ENCODE measurements at regions of chr11 and their contacts with region 1.

Region 1: DNA sequence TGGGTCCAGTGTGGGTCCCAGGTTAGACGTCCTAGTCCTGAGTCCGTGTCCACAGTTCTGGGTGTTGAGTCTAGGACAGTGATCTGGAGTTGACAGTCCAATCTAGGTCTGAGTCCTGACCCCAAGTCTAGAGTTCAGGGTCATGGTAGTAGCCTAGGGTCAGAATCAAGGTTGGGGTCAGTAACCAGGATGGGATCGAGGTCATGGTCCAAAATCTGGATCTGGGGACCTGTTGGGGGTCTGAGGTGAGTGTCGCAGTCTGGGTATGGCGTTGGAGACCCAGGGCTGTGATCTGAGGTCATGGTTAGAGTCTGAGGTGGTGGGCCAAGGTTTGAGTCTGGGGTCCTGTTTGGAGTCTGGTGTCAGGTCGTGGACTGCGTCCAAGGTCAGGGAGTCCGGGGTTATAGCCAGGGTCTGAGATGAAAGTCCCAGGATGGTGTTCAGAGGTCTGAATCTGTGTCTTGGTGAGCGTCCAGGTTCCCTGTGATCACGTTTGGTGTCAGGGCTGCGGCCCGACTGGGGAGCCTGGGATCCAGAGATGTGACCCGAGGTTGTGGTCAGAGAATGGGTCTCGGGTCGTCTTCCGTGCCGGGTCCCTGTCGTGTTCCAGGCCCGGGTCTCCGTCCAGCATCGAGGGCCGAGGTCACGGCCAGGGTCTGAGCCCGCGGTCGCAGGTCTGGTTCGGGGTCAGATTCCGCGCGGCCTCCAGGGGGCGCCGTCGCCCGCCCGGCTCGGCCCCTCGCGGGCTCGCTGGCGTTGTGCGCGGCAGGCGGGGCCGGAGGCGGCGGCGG is 445 bp upstream of the GRK2 start:
- DNase-seq: peak in 1 of 2 experiments; percentile 92
- H3K4me3 ChIP-seq: peak overlapping the region; percentile 16 to 59 (median 31); a peak in 6 of 8 replicates
- H3K27ac ChIP-seq: no peak overlapping the region
- H3K4me1 ChIP-seq: peaks cover 8 to 36% (median 34%) of the 10 kb centered on the region in 4 experiments
- H3K27me3 ChIP-seq: peaks cover 0 to 3% (median 0%) of the 10 kb centered on the region in 4 experiments; a peak in 4 of 7 replicates
- CTCF ChIP-seq: peak in 2 of 3 experiments; percentile 80 to 92; a peak in 3 of 4 replicates
- EP300 ChIP-seq: no peak
- POLR2A ChIP-seq: no peak
- RAD21 ChIP-seq: peak; percentile 61 to 77

Region 2: DNA sequence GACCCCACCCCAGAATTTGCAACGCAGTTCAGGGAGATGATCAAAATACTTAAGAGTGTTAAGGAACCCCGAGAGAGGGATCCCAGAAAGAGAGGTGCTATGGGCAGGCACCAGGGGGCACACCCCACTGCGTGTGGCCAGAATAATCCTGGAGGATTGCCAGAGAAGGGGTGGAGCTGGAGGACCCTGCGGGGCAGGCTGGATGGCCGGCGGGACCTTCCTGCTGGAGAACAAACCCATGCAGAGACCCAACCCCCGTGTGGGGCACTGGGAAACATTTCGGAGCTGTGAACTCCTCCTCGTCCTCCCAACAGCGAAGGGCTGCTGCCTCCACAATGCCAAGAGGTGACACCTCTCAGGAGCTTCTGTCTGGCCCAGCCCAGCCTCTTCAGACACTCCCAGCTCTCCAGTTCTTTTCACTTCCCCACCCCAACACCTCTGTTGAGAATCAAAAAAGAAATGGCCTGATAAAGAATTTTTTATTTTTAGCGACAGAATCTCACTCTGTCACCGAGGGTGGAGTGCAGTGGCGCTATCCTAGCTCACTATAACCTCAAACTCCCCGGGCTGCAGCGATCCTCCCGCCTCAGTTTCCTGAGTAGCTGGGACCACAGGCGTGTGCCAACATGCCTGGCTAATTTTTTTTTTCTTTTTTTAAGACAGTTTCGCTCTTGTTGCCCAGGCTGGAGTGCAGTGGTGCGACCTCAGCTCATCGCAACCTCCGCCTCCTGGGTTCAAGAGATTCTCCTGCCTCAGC is 183.6 kb before region 1 on chr11:
- CTCF ChIA-PET with region 1: interaction called, 13 read pairs
- POLR2A ChIA-PET with region 1: interaction called, 3 read pairs
- DNase-seq: peak in 1 of 2 experiments; percentile 68
- H3K4me3 ChIP-seq: peak overlapping the region in 1 of 4 experiments; percentile 45; a peak in 3 of 8 replicates
- H3K27ac ChIP-seq: no peak overlapping the region
- H3K4me1 ChIP-seq: peaks cover 0 to 11% (median 4%) of the 10 kb centered on the region in 4 experiments; a peak in 4 of 7 replicates
- H3K27me3 ChIP-seq: no peaks in the 10 kb centered on the region
- CTCF ChIP-seq: peak; percentile 14 to 19 (median 17)
- EP300 ChIP-seq: no peak
- POLR2A ChIP-seq: no peak
- RAD21 ChIP-seq: peak in 1 of 2 experiments; percentile 41; a peak in 1 of 4 replicates

Region 3: DNA sequence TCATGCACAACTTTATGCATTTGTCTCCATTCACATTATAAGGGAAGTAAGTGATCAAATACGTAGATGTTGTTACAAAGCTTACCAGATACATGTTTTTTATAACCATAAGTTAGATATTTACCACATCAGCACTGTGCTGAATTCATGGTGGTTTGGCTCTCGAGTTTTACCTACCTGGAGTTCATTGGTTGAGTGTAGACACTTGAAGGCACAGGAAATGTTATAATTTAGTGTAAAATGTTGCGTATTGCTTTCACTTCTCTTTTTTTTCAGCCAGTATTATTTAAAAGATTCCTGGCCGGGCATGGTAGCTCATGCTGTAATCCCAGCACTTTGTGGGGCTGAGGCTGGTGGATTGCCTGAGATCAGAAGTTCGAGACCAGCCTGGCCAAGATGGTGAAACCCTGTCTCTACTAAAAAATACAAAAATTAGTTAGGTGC is 52.6 kb before region 1 on chr11:
- CTCF ChIA-PET with region 1: no interaction called
- POLR2A ChIA-PET with region 1: no interaction called
- DNase-seq: no peak
- H3K4me3 ChIP-seq: no peak overlapping the region
- H3K27ac ChIP-seq: no peak overlapping the region
- H3K4me1 ChIP-seq: no peaks in the 10 kb centered on the region
- H3K27me3 ChIP-seq: no peaks in the 10 kb centered on the region
- CTCF ChIP-seq: no peak
- EP300 ChIP-seq: no peak
- POLR2A ChIP-seq: no peak
- RAD21 ChIP-seq: no peak

Region 4: GRCh38 chr11:67252831-67253239 is 13.0 kb before region 1 on chr11:
- CTCF ChIA-PET with region 1: interaction called, 26 read pairs
- POLR2A ChIA-PET with region 1: interaction called, 7 read pairs
- DNase-seq: no peak
- H3K4me3 ChIP-seq: no peak overlapping the region
- H3K27ac ChIP-seq: no peak overlapping the region
- H3K4me1 ChIP-seq: no peaks in the 10 kb centered on the region
- H3K27me3 ChIP-seq: no peaks in the 10 kb centered on the region
- CTCF ChIP-seq: peak; percentile 19 to 67 (median 34); a peak in 3 of 4 replicates
- EP300 ChIP-seq: no peak
- POLR2A ChIP-seq: no peak
- RAD21 ChIP-seq: peak; percentile 47 to 54

Region 5: DNA sequence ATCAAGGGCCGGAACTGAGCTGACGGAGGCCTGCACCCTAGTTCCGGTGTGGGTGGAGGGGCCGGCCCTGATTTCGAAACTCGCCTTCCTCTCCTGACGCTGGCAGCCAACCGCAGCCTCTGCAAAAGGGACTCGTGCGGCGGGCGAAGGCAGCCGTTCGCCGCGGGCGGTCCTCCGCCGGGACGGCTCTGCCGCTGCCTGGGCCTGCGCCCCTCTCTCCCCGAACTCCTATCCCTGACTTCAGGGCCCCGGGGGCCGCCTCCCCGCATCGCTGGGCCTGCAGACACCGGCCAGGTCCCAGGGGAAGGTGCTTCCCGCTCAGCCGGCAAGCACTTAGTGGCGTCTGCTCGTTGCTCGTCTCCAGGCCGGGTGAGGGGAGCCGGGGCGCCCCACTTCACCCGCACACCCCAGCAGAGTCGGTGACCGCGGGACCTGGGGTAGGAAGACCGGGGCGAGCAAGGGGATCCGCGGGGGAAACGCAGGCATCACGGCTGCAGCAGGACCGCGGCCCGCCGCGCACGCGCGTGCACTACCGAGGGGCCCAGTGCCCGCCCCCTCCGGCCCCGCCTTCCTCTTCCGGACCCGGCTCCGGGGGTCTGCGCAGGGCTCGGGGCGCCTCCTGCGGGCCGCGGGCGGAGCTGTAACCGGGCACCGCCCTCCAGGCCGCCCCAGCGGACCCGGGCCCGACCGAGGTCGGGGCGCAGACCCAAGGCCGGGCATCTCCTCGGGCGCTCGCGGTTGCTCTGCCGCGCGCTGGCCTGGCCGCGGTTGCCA is 22.8 kb after region 1 on chr11:
- CTCF ChIA-PET with region 1: interaction called, 47 read pairs
- POLR2A ChIA-PET with region 1: interaction called, 24 read pairs
- DNase-seq: peak in 1 of 2 experiments; percentile 91
- H3K4me3 ChIP-seq: peak overlapping the region; percentile 58 to 85 (median 72)
- H3K27ac ChIP-seq: peak overlapping the region; percentile 86
- H3K4me1 ChIP-seq: peaks cover 0 to 18% (median 11%) of the 10 kb centered on the region in 4 experiments; a peak in 6 of 7 replicates
- H3K27me3 ChIP-seq: no peaks in the 10 kb centered on the region
- CTCF ChIP-seq: peak in 2 of 3 experiments; percentile 52 to 79; a peak in 3 of 4 replicates
- EP300 ChIP-seq: no peak
- POLR2A ChIP-seq: peak in 1 of 2 experiments; percentile 61; a peak in 1 of 3 replicates
- RAD21 ChIP-seq: peak; percentile 48 to 80; a peak in 3 of 4 replicates

Region 6: GRCh38 chr11:67317205-67317887 is 51.5 kb after region 1 on chr11:
- CTCF ChIA-PET with region 1: interaction called, 186 read pairs
- POLR2A ChIA-PET with region 1: interaction called, 9 read pairs
- DNase-seq: peak; percentile 90 to 99
- H3K4me3 ChIP-seq: peak overlapping the region; percentile 41 to 89 (median 68)
- H3K27ac ChIP-seq: no peak overlapping the region
- H3K4me1 ChIP-seq: peaks cover 0 to 3% (median 0%) of the 10 kb centered on the region in 4 experiments; a peak in 2 of 7 replicates
- H3K27me3 ChIP-seq: peaks cover 5 to 16% (median 11%) of the 10 kb centered on the region in 4 experiments; a peak in 6 of 7 replicates
- CTCF ChIP-seq: peak; percentile 89 to 93 (median 92)
- EP300 ChIP-seq: no peak
- POLR2A ChIP-seq: no peak; a peak in 2 of 3 replicates
- RAD21 ChIP-seq: peak; percentile 93 to 95

Region 7: GRCh38 chr11:67353317-67354074 is 87.7 kb after region 1 on chr11 and contains the start of gene POLD4:
- CTCF ChIA-PET with region 1: interaction called, 13 read pairs
- POLR2A ChIA-PET with region 1: interaction called, 3 read pairs
- DNase-seq: peak; percentile 79 to 99
- H3K4me3 ChIP-seq: peak within 1 kb of the TSS; percentile 57 to 78 (median 73)
- H3K27ac ChIP-seq: peak within 1 kb of the TSS; percentile 72; the same call in 1 of the 2 replicates
- H3K4me1 ChIP-seq: peaks cover 0 to 18% (median 15%) of the 10 kb centered on the region in 4 experiments; a peak in 6 of 7 replicates
- H3K27me3 ChIP-seq: no peaks in the 10 kb centered on the region; a peak in 1 of 7 replicates
- CTCF ChIP-seq: no peak
- EP300 ChIP-seq: no peak
- POLR2A ChIP-seq: peak in 1 of 2 experiments; percentile 64; a peak in 2 of 3 replicates
- RAD21 ChIP-seq: no peak
- total RNA-seq, gene POLD4: 18.5 and 21.2 TPM in 2 replicates